IMR-90 (cell line): ENCODE measurements at regions of chr11 and their contacts with region 1.

Region 1: DNA sequence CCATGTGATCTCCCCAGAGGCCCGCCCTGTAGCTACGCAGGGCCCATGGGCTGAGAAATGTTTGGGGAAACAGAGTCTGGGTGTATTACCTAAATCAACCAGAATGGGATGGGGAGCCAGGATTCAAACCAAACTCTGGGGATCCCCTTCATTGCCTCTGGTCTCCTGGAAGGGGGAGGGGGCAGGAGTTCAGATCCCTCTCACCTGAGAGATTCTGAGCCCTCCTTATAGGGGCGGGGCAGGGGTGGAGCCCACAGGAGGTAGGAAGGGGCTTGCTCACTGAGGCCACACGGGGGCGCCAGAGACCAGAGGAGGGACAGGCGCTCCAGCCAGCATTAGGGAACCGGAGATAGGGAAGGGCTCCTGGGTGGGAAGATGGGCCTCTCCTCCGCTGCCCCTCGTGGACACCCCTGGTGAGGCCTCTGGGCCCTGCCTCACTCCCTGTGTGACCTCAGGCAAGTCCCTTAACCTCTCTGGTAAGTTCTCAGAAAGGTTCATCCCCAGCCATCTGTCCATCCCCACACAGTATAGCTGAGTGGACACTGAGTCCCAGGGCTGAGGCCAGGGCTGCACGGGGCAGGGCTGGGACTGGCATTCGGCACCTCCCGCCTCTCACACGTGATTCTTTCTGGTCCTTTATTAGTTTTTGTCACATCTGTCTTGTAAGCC is 2.7 kb upstream of the CDC42BPG start:
- DNase-seq: peak; percentile 80
- ATAC-seq: peak; percentile 84
- H3K4me3 ChIP-seq: no peak overlapping the region
- H3K27ac ChIP-seq: no peak overlapping the region
- H3K4me1 ChIP-seq: peaks cover 20% of the 10 kb centered on the region
- H3K27me3 ChIP-seq: no peaks in the 10 kb centered on the region
- CTCF ChIP-seq: peak; percentile 97
- POLR2A ChIP-seq: peak; percentile 61
- RAD21 ChIP-seq: peak; percentile 98

Region 2: DNA sequence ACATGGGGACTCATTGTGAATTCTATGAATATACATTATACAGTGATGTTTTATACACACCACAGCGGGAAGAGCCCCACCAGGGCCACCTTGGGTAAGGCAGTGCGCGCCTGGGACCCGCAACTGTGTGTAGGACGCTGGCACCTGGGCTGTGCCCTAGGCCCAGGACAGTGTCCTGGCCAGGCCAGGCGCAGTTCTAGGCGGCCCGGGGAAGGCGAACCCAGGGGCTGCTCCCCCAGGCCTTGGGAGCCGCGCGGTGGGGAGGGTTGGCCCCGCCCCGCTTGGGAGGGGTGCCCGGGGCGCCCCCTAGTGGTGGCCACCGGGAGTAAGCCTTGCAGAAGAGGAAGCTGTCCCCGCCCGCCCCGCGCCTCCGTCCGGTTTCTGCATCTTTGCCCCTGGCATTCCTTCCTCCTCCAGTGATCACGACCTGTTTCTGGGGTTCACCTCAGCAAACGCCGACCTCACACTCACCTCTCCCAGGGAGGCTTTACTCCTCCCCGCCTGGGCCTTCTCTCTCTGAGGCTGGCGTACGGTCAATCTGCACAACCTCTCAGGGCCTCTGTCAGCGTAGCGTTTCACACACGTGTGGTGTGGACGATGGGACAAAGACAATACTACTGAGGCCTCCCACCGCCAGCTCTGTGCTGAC is 40.7 kb after region 1 on chr11:
- CTCF ChIA-PET with region 1: interaction called, 15 read pairs
- POLR2A ChIA-PET with region 1: no interaction called
- dilution Hi-C with region 1: no loop called
- in situ Hi-C with region 1: loop called (anchors 5 kb)
- intact Hi-C with region 1: loop called (anchors 1 kb)
- DNase-seq: no peak
- ATAC-seq: peak; percentile 84
- H3K4me3 ChIP-seq: no peak overlapping the region
- H3K27ac ChIP-seq: peak overlapping the region; percentile 30; the same call in 1 of the 2 replicates
- H3K4me1 ChIP-seq: peaks cover 10% of the 10 kb centered on the region
- H3K27me3 ChIP-seq: no peaks in the 10 kb centered on the region
- CTCF ChIP-seq: peak; percentile 76
- POLR2A ChIP-seq: no peak
- RAD21 ChIP-seq: peak; percentile 41

Region 3: DNA sequence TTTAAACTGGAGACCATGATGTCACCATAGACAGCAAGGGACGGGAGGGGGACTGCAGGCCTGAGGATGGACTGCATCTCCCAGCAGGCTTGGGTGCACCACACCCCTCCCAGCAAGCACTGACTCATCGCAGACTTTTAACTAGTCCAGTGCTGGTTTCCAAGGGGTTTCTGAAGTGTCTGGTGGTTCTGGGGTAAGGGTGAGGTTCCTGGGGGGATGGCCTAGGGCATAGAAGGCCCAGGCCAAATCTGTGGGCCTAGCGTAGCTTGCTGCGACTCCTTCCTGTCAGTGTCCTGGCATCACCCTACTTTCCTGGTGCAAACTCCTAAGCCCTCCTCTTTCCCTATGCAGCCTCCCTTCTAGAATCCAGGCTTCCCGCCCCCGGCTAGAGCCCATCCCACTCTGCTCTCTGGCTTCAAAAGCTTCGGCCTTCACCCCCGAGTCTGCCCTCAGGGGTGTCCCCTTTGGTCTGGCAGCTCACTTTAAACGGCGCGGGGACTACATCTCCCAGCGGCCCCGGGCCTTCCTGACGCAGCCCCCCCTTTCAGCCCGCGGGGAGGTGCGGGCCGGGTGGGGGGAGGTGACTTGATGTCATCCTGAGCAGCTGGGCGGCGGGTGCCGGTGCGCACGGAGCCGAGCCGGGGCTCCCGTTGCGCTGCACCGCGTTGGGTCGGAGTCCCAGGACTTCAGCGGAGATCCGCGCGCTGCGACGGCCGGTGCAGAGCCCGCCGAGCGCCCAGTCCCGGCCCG is 77.1 kb after region 1 on chr11 and contains the start of gene PPP2R5B:
- CTCF ChIA-PET with region 1: no interaction called
- POLR2A ChIA-PET with region 1: no interaction called
- dilution Hi-C with region 1: no loop called
- in situ Hi-C with region 1: no loop called
- intact Hi-C with region 1: loop called (anchors 1 kb)
- DNase-seq: peak; percentile 94
- ATAC-seq: peak; percentile 97
- H3K4me3 ChIP-seq: peak within 1 kb of the TSS; percentile 83
- H3K27ac ChIP-seq: peak within 1 kb of the TSS; percentile 83
- H3K4me1 ChIP-seq: peaks cover 7% of the 10 kb centered on the region
- H3K27me3 ChIP-seq: no peaks in the 10 kb centered on the region
- CTCF ChIP-seq: no peak
- POLR2A ChIP-seq: peak; percentile 70
- RAD21 ChIP-seq: 0 out of 2 replicates have a peak, but pooled peaks have one; percentile 8
- total RNA-seq, gene PPP2R5B: 6.4 and 6.5 TPM in 2 replicates

Region 4: GRCh38 chr11:65003282-65003681 is 156.2 kb after region 1 on chr11:
- CTCF ChIA-PET with region 1: interaction called, 3 read pairs
- POLR2A ChIA-PET with region 1: no interaction called
- dilution Hi-C with region 1: no loop called
- in situ Hi-C with region 1: loop called (anchors 10 kb)
- intact Hi-C with region 1: loop called (anchors 5 kb)
- DNase-seq: peak; percentile 66
- ATAC-seq: peak; percentile 55
- H3K4me3 ChIP-seq: no peak overlapping the region
- H3K27ac ChIP-seq: no peak overlapping the region
- H3K4me1 ChIP-seq: peaks cover 5% of the 10 kb centered on the region; the same call in 1 of the 2 replicates
- H3K27me3 ChIP-seq: no peaks in the 10 kb centered on the region
- CTCF ChIP-seq: no peak
- POLR2A ChIP-seq: no peak
- RAD21 ChIP-seq: no peak

Region 5: GRCh38 chr11:65111744-65112414 is 264.7 kb after region 1 on chr11 and contains the start of gene TM7SF2:
- CTCF ChIA-PET with region 1: no interaction called
- POLR2A ChIA-PET with region 1: no interaction called
- dilution Hi-C with region 1: no loop called
- in situ Hi-C with region 1: no loop called
- intact Hi-C with region 1: loop called (anchors 2 kb)
- DNase-seq: peak; percentile 86
- ATAC-seq: peak; percentile 84
- H3K4me3 ChIP-seq: peak within 1 kb of the TSS; percentile 43
- H3K27ac ChIP-seq: no peak within 1 kb of the TSS
- H3K4me1 ChIP-seq: peaks cover 20% of the 10 kb centered on the region
- H3K27me3 ChIP-seq: no peaks in the 10 kb centered on the region
- CTCF ChIP-seq: no peak
- POLR2A ChIP-seq: peak; percentile 59; the same call in 1 of the 2 replicates
- RAD21 ChIP-seq: no peak
- total RNA-seq, gene TM7SF2: 4.7 and 5.7 TPM in 2 replicates